Calu3 (cell line): ENCODE measurements at regions of chr14 and their contacts with region 1.

Region 1: GRCh38 chr14:20327005-20327869 is 5.8 kb downstream of the CCNB1IP1 start:
- DNase-seq: peak; percentile 36
- H3K4me3 Mint-ChIP-seq: no peak overlapping the region
- H3K27ac Mint-ChIP-seq: no peak overlapping the region
- H3K4me1 Mint-ChIP-seq: peaks cover 13% of the 10 kb centered on the region
- H3K27me3 Mint-ChIP-seq: no peaks in the 10 kb centered on the region
- CTCF ChIP-seq: peak; percentile 46

Region 2: DNA sequence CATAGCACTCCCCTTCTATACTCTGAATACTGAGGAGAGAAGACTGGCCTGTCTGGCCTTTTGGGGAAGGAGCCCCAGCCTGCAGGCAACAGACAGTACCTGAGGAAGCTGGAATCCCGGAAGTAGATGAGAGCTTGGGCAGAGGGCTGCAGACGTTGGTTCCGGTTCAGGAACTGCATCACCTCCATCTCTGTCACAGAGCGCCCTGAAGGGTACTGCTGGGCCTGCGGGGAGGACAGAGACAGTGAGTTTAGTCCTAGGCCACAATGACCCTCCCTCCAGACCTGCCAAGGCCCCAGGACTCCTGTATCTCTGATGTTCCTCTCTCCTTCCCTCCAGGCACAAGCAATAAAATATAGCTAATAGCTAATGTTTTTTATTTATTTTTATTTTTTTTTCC is 57.6 kb after region 1 on chr14:
- CTCF ChIA-PET with region 1: interaction called, 13 read pairs
- intact Hi-C with region 1: no loop called
- DNase-seq: no peak
- H3K4me3 Mint-ChIP-seq: no peak overlapping the region
- H3K27ac Mint-ChIP-seq: no peak overlapping the region
- H3K4me1 Mint-ChIP-seq: no peaks in the 10 kb centered on the region
- H3K27me3 Mint-ChIP-seq: no peaks in the 10 kb centered on the region
- CTCF ChIP-seq: no peak